Calu3 (cell line): ENCODE measurements at regions of chr21 and their contacts with region 1.

Region 1: GRCh38 chr21:38219049-38219628 is 37.7 kb upstream of the KCNJ15 start:
- DNase-seq: peak; percentile 75
- H3K4me3 Mint-ChIP-seq: no peak overlapping the region
- H3K27ac Mint-ChIP-seq: peak overlapping the region; percentile 67
- H3K4me1 Mint-ChIP-seq: peaks cover 32% of the 10 kb centered on the region
- H3K27me3 Mint-ChIP-seq: no peaks in the 10 kb centered on the region
- CTCF ChIP-seq: peak; percentile 68

Region 2: DNA sequence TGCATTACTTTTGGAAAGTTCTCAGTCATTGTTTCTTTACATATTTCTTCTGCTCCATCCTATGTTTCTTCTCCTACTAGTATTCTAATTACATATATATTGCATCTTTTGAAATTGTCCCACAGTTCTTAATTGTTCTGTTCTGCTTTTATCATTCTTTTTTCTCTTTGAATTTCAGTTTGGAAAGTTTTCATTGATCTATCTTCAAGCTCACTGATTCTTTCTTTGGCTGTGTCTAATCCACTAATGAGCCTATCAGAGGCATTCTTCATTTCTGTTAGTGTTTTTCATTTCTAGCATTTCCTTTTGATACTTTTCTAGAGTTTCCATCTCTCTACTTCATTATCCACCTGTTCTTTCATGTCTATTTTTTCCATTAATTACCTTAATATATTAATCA is 121.3 kb before region 1 on chr21:
- CTCF ChIA-PET with region 1: no interaction called
- intact Hi-C with region 1: no loop called
- DNase-seq: no peak
- H3K4me3 Mint-ChIP-seq: no peak overlapping the region
- H3K27ac Mint-ChIP-seq: no peak overlapping the region
- H3K4me1 Mint-ChIP-seq: no peaks in the 10 kb centered on the region
- H3K27me3 Mint-ChIP-seq: peaks cover 84% of the 10 kb centered on the region
- CTCF ChIP-seq: no peak

Region 3: GRCh38 chr21:38170280-38170679 is 48.9 kb before region 1 on chr21:
- CTCF ChIA-PET with region 1: interaction called, 14 read pairs
- intact Hi-C with region 1: loop called (anchors 2 kb)
- DNase-seq: peak; percentile 52
- H3K4me3 Mint-ChIP-seq: no peak overlapping the region
- H3K27ac Mint-ChIP-seq: no peak overlapping the region
- H3K4me1 Mint-ChIP-seq: peaks cover 27% of the 10 kb centered on the region
- H3K27me3 Mint-ChIP-seq: no peaks in the 10 kb centered on the region
- CTCF ChIP-seq: no peak

Region 4: GRCh38 chr21:38241029-38241740 is 22.0 kb after region 1 on chr21:
- CTCF ChIA-PET with region 1: no interaction called
- intact Hi-C with region 1: loop called (anchors 2 kb)
- DNase-seq: peak; percentile 56
- H3K4me3 Mint-ChIP-seq: no peak overlapping the region
- H3K27ac Mint-ChIP-seq: peak overlapping the region; percentile 39
- H3K4me1 Mint-ChIP-seq: peaks cover 34% of the 10 kb centered on the region
- H3K27me3 Mint-ChIP-seq: no peaks in the 10 kb centered on the region
- CTCF ChIP-seq: no peak

Region 5: GRCh38 chr21:38257667-38258066 is 38.5 kb after region 1 on chr21:
- CTCF ChIA-PET with region 1: interaction called, 4 read pairs
- intact Hi-C with region 1: loop called (anchors 2 kb)
- DNase-seq: no peak
- H3K4me3 Mint-ChIP-seq: peak overlapping the region; percentile 82
- H3K27ac Mint-ChIP-seq: peak overlapping the region; percentile 85
- H3K4me1 Mint-ChIP-seq: peaks cover 54% of the 10 kb centered on the region
- H3K27me3 Mint-ChIP-seq: no peaks in the 10 kb centered on the region
- CTCF ChIP-seq: no peak